Left ventricle myocardium inferior (tissue), 1 donor: ENCODE measurements at regions of chr12 and their contacts with region 1.

Region 1: GRCh38 chr12:48084066-48084465 is 21.8 kb downstream of the SENP1 start:
- DNase-seq: no peak
- H3K4me3 ChIP-seq: no peak overlapping the region
- H3K27ac ChIP-seq: no peak overlapping the region
- H3K4me1 ChIP-seq: no peaks in the 10 kb centered on the region
- H3K27me3 ChIP-seq: no peaks in the 10 kb centered on the region
- CTCF ChIP-seq: peak; percentile 52

Region 2: GRCh38 chr12:48165094-48165981 is 81.3 kb after region 1 on chr12:
- intact Hi-C with region 1: loop called (anchors 5 kb)
- DNase-seq: no peak
- H3K4me3 ChIP-seq: no peak overlapping the region
- H3K27ac ChIP-seq: no peak overlapping the region
- H3K4me1 ChIP-seq: peaks cover 7% of the 10 kb centered on the region
- H3K27me3 ChIP-seq: peaks cover 10% of the 10 kb centered on the region
- CTCF ChIP-seq: peak; percentile 97